A673 (cell line): ENCODE measurements at regions of chr10 and their contacts with region 1.

Region 1: DNA sequence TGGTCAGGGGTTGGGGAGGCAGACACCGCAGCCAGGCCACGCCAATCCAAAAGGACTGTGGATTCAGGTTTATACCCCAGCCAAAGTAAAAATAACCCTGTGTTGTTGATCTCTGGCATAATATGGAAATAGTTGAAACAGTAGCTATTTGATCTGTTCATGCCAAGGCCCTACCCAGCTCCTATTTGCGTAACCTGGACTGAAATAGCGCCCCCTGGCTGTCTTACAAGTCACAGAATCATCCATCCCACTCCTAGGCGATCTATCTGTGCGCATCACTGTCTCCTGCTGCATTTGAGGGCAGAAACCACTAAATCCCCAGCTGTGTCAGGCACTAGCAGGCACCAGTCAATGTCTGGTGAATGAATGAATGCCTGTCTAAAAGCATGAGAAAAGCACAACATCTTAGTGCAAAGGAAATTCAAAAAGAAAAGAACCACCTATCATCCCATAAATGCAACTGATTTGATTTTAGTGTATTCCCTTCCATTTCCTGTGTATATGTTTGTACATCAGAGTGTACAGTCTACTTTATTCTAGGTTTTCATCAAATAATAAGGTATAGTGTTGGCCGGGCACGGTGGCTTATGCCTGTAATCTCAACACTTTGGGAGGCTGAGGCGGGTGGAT is 160.0 kb downstream of the SLIT1 start:
- DNase-seq: peak; percentile 78
- H3K4me3 ChIP-seq: no peak overlapping the region
- H3K27ac ChIP-seq: no peak overlapping the region
- H3K4me1 ChIP-seq: no peaks in the 10 kb centered on the region
- H3K27me3 ChIP-seq: no peaks in the 10 kb centered on the region
- CTCF ChIP-seq: peak; percentile 83

Region 2: DNA sequence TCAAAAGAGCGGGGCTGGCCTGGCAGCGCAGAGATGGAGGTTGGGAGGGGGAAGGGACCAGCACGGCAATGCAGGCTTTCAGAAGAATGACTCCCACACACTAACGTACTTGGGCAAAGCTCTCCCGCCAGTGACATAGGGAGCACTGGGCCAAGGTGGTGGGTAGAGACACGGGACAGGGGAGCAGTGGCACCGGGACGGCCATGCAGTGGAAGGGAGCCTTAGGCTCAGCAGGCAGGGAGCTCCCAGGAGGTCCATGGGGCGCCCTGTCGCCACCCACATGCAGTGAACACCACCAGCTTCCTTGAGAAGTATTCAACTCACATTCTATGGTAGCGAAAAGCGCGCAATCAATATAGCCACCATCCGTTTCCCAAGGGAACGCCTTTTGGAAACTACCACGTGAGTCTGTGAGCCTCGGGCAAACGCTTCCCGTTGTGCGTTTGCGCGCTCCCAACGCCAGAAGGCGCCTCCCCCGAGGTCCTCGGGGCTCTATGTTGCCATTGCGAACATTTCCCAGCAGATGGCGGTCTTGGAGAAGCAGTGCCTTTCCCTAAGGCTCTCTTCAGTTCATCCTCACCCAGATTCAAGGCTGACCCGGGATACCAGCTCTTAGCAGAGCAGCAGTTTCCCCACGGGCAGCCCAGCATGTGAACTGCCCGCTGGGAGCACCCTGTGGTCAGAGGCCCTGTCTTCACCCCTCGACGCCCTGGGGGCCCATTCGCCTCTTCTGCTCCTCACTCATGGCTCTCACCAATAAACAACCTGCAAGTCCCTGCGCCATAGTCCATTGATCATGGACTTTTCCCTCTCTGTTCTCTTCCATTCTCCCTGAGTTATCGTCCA is 650.5 kb before region 1 on chr10:
- CTCF ChIA-PET with region 1: interaction called, 7 read pairs
- POLR2A ChIA-PET with region 1: no interaction called
- intact Hi-C with region 1: loop called (anchors 2 kb)
- DNase-seq: peak; percentile 93
- H3K4me3 ChIP-seq: peak overlapping the region; percentile 41
- H3K27ac ChIP-seq: no peak overlapping the region
- H3K4me1 ChIP-seq: no peaks in the 10 kb centered on the region
- H3K27me3 ChIP-seq: no peaks in the 10 kb centered on the region
- CTCF ChIP-seq: peak; percentile 98

Region 3: GRCh38 chr10:96395931-96396877 is 629.5 kb before region 1 on chr10:
- CTCF ChIA-PET with region 1: interaction called, 4 read pairs
- POLR2A ChIA-PET with region 1: no interaction called
- intact Hi-C with region 1: loop called (anchors 5 kb)
- DNase-seq: peak; percentile 75
- H3K4me3 ChIP-seq: no peak overlapping the region
- H3K27ac ChIP-seq: no peak overlapping the region
- H3K4me1 ChIP-seq: peaks cover 9% of the 10 kb centered on the region
- H3K27me3 ChIP-seq: peaks cover 28% of the 10 kb centered on the region
- CTCF ChIP-seq: peak; percentile 91

Region 4: DNA sequence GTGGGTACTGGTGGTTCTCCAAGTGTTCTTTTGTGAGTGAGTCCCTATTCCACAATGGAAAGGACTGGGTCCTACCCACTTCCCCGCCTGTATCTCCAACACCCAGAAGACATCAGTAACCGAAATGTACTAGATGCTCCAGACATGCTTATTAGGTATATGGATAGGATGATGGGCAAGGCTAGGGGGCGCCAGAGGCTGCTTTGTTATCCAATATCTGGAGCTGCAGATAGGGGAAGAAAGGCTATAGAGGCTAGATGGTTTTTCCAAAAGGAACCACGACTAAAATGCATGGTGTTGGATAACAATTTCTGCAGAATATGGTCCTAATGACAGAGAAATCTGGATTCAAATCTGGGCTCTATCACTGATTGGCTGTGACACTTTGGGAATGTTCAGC is 382.8 kb before region 1 on chr10:
- CTCF ChIA-PET with region 1: interaction called, 14 read pairs
- POLR2A ChIA-PET with region 1: no interaction called
- intact Hi-C with region 1: loop called (anchors 10 kb)
- DNase-seq: peak; percentile 66
- H3K4me3 ChIP-seq: no peak overlapping the region
- H3K27ac ChIP-seq: no peak overlapping the region
- H3K4me1 ChIP-seq: no peaks in the 10 kb centered on the region
- H3K27me3 ChIP-seq: peaks cover 5% of the 10 kb centered on the region
- CTCF ChIP-seq: peak; percentile 73

Region 5: GRCh38 chr10:96765406-96766240 is 260.1 kb before region 1 on chr10:
- CTCF ChIA-PET with region 1: no interaction called
- POLR2A ChIA-PET with region 1: no interaction called
- intact Hi-C with region 1: loop called (anchors 10 kb)
- DNase-seq: peak; percentile 44
- H3K4me3 ChIP-seq: no peak overlapping the region
- H3K27ac ChIP-seq: no peak overlapping the region
- H3K4me1 ChIP-seq: no peaks in the 10 kb centered on the region
- H3K27me3 ChIP-seq: no peaks in the 10 kb centered on the region
- CTCF ChIP-seq: peak; percentile 68

Region 6: GRCh38 chr10:96910488-96911395 is 115.0 kb before region 1 on chr10:
- CTCF ChIA-PET with region 1: no interaction called
- POLR2A ChIA-PET with region 1: no interaction called
- intact Hi-C with region 1: loop called (anchors 5 kb)
- DNase-seq: peak; percentile 58
- H3K4me3 ChIP-seq: no peak overlapping the region
- H3K27ac ChIP-seq: no peak overlapping the region
- H3K4me1 ChIP-seq: no peaks in the 10 kb centered on the region
- H3K27me3 ChIP-seq: no peaks in the 10 kb centered on the region
- CTCF ChIP-seq: peak; percentile 79

Region 7: DNA sequence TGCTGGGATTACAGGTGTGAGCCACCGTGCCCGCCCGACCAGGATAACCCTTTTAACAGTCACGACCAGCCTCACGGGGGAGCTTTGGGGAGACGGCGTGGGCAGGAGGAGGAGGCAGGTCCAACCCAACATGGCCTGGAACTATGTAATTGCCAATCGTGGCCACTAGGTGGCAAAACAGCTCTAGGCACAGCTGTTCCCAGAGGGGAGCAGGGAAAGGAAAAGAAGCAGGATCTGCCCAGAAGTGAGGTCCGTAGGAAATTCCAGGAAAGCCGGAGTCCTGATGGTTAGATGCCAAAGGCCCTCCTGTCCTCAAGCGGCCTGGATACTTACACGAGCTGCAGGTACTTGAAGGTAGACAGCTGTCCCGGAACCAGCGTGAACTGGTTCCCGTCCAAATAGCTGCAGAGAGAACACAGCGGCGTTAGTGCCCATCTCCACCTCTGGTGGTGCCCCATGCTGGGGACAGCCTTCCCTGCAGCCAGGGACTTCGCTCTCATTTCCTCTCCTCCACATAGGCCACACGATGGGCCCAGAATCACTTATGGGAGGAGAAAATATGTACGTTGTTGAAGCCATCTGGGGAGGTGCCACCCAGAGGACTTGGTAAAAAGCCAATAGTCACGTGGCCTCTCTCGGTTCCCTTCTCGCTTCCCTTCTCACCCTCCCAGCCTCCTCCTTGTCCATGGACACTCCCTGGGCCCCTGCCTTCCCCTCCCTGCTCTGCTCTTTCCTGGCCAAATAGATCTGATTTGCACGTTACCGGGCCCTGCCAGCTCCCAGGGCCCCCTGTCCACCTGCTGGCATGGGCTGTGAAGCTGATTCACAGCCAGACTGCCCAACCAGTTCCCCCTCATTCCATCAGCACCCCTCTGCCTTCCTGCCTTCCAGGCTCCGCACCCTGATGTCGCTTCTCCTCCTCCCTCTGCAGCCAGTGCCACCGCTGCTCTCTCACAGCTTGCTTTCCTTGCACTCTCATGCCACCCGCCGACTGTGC is 11.9 kb after region 1 on chr10:
- CTCF ChIA-PET with region 1: interaction called, 26 read pairs
- POLR2A ChIA-PET with region 1: no interaction called
- intact Hi-C with region 1: no loop called
- DNase-seq: peak; percentile 88
- H3K4me3 ChIP-seq: peak overlapping the region; percentile 41
- H3K27ac ChIP-seq: no peak overlapping the region
- H3K4me1 ChIP-seq: no peaks in the 10 kb centered on the region
- H3K27me3 ChIP-seq: no peaks in the 10 kb centered on the region
- CTCF ChIP-seq: peak; percentile 89

Region 8: GRCh38 chr10:97048649-97049427 is 23.1 kb after region 1 on chr10:
- CTCF ChIA-PET with region 1: no interaction called
- POLR2A ChIA-PET with region 1: no interaction called
- intact Hi-C with region 1: no loop called
- DNase-seq: no peak
- H3K4me3 ChIP-seq: no peak overlapping the region
- H3K27ac ChIP-seq: no peak overlapping the region
- H3K4me1 ChIP-seq: no peaks in the 10 kb centered on the region
- H3K27me3 ChIP-seq: peaks cover 10% of the 10 kb centered on the region
- CTCF ChIP-seq: no peak

Region 9: GRCh38 chr10:97518301-97519043 is 492.7 kb after region 1 on chr10:
- CTCF ChIA-PET with region 1: no interaction called
- POLR2A ChIA-PET with region 1: no interaction called
- intact Hi-C with region 1: no loop called
- DNase-seq: peak; percentile 38
- H3K4me3 ChIP-seq: no peak overlapping the region
- H3K27ac ChIP-seq: no peak overlapping the region
- H3K4me1 ChIP-seq: peaks cover 12% of the 10 kb centered on the region
- H3K27me3 ChIP-seq: peaks cover 3% of the 10 kb centered on the region
- CTCF ChIP-seq: no peak